ENCODE measurements at regions of chr20 and their contacts with region 1.

Region 1: GRCh38 chr20:34573541-34574300 is 15.2 kb downstream of the MAP1LC3A start:
- DNase-seq: no peak
- H3K4me3 ChIP-seq: no peak overlapping the region
- H3K27ac ChIP-seq: no peak overlapping the region
- H3K4me1 ChIP-seq: peaks cover 3% of the 10 kb centered on the region; the same call in 1 of the 2 replicates
- H3K27me3 ChIP-seq: no peaks in the 10 kb centered on the region
- CTCF ChIP-seq: no peak

Region 2: GRCh38 chr20:34621383-34622367 is 48.0 kb after region 1 on chr20:
- CTCF ChIA-PET with region 1: no interaction called
- POLR2A ChIA-PET with region 1: interaction called, 10 read pairs
- intact Hi-C with region 1: no loop called
- DNase-seq: peak; percentile 25 to 68
- H3K4me3 ChIP-seq: no peak overlapping the region
- H3K27ac ChIP-seq: peak overlapping the region; percentile 40; the same call in 1 of the 2 replicates
- H3K4me1 ChIP-seq: peaks cover 25% of the 10 kb centered on the region
- H3K27me3 ChIP-seq: no peaks in the 10 kb centered on the region
- CTCF ChIP-seq: no peak

Measured in PC-9 (cell line).